Heart left ventricle (tissue), 16 donors: ENCODE measurements at regions of chr5 and their contacts with region 1.

Region 1: DNA sequence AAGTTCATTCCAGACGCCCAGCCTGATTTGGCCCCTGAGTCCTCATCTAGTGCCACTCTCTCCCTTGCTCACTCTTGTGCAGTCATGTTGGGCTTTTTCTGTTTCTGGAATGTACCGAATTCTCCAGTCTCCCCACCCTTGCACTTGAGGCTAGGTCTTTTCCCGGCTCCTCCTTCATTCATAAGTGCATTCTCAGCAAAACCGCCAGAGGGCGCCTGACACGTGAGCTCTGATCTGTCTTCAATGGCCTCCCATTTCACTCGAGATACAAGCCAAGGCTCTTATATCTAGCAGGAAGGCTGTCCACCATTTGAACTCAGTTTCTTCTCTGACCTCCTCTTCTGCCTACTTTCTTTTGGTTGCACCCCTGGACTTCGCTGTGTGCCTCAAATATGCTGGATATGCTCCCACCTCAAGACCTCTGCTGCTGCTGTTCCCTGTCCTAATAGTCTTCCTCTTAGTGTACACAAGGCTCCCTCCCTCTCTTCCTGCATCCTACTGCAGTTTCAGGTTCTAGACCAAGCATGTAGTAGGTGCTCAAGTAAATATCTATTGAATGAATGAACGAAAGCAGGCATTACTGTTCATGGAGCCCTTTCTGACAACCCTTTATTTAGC is 568.1 kb upstream of the WWC1 start:
- DNase-seq: peak; percentile 60 to 73 (median 63)
- ATAC-seq: peak; percentile 78 to 95 (median 89)
- H3K4me3 ChIP-seq: no peak overlapping the region
- H3K27ac ChIP-seq: no peak overlapping the region
- H3K4me1 ChIP-seq: no peaks in the 10 kb centered on the region
- H3K27me3 ChIP-seq: no peaks in the 10 kb centered on the region
- CTCF ChIP-seq: peak; percentile 79 to 94 (median 86)
- POLR2A ChIP-seq: no peak

Region 2: GRCh38 chr5:167920589-167920988 is 197.2 kb after region 1 on chr5:
- intact Hi-C with region 1: loop called in 1 of 10 experiments (anchors 10 kb)
- DNase-seq: no peak
- ATAC-seq: no peak
- H3K4me3 ChIP-seq: no peak overlapping the region
- H3K27ac ChIP-seq: no peak overlapping the region
- H3K4me1 ChIP-seq: peaks cover 0 to 6% (median 0%) of the 10 kb centered on the region in 12 donors
- H3K27me3 ChIP-seq: no peaks in the 10 kb centered on the region
- CTCF ChIP-seq: no peak
- POLR2A ChIP-seq: no peak

Region 3: GRCh38 chr5:167939686-167940085 is 216.3 kb after region 1 on chr5:
- intact Hi-C with region 1: loop called in 4 of 10 experiments (anchors 5 to 10 kb)
- DNase-seq: no peak
- ATAC-seq: no peak
- H3K4me3 ChIP-seq: no peak overlapping the region
- H3K27ac ChIP-seq: peak overlapping the region in 8 of 12 donors; percentile 0 to 91 (median 86)
- H3K4me1 ChIP-seq: peaks cover 0 to 31% (median 7%) of the 10 kb centered on the region in 12 donors
- H3K27me3 ChIP-seq: no peaks in the 10 kb centered on the region
- CTCF ChIP-seq: no peak
- POLR2A ChIP-seq: no peak

Region 4: GRCh38 chr5:168039566-168040248 is 316.3 kb after region 1 on chr5:
- intact Hi-C with region 1: loop called in 3 of 10 experiments (anchors 10 kb)
- DNase-seq: no peak
- ATAC-seq: peak in 1 of 4 donors; percentile 8
- H3K4me3 ChIP-seq: no peak overlapping the region
- H3K27ac ChIP-seq: no peak overlapping the region
- H3K4me1 ChIP-seq: peaks cover 0 to 6% (median 0%) of the 10 kb centered on the region in 12 donors
- H3K27me3 ChIP-seq: no peaks in the 10 kb centered on the region
- CTCF ChIP-seq: no peak
- POLR2A ChIP-seq: no peak

Region 5: GRCh38 chr5:168219515-168220410 is 496.4 kb after region 1 on chr5:
- intact Hi-C with region 1: loop called (anchors 1 to 5 kb)
- DNase-seq: peak in 1 of 5 donors; percentile 38
- ATAC-seq: peak; percentile 38 to 66 (median 44)
- H3K4me3 ChIP-seq: peak overlapping the region in 4 of 12 donors; percentile 9 to 39 (median 30)
- H3K27ac ChIP-seq: peak overlapping the region in 2 of 12 donors; percentile 14 to 29
- H3K4me1 ChIP-seq: peaks cover 0 to 29% (median 4%) of the 10 kb centered on the region in 12 donors
- H3K27me3 ChIP-seq: no peaks in the 10 kb centered on the region
- CTCF ChIP-seq: peak; percentile 75 to 91 (median 84)
- POLR2A ChIP-seq: no peak